ENCODE measurements at regions of chr20 and their contacts with region 1.

Region 1: DNA sequence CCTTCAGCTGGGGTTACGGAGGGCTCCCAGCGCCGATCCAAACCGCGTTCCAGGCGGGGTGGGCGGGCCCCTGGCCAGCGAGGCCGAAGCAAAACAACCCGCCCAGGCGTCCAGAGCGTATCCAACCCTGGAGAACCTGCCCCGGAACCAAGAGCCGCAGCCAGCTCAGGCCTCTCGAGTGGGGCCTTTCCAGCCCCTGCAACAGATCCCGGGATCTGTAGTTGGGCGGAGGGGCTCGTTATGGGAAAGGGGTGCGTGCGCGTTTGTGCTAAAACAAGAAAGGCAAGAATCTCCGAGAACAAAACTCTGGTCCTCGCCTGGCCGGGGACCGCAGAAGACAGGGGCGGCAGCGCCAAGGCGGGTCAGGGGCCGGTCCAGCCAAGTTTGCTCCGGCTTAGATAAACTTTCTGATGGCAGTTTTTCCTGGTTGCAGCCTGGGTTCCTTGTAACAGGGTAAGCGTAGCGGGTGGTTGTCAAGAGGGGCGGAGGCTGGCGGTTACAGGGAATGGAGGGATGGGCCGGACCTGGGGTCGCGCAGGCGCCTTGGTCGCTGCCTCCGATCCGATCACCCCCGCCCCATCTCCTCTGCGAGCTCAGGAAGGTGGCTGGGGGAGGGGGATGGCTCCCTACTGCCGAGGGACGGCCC is 448 bp upstream of the RIN2 start:
- DNase-seq: peak; percentile 86
- ATAC-seq: peak; percentile 82
- H3K4me3 ChIP-seq: peak overlapping the region; percentile 61 to 85 (median 70)
- H3K27ac ChIP-seq: peak overlapping the region; percentile 61
- H3K4me1 ChIP-seq: peaks cover 37% of the 10 kb centered on the region
- H3K27me3 ChIP-seq: peaks cover 0 to 24% of the 10 kb centered on the region in 2 experiments; a peak in 3 of 5 replicates
- CTCF ChIP-seq: peak; percentile 20; the same call in 1 of the 2 replicates
- EP300 ChIP-seq: no peak; a peak in 1 of 4 replicates
- POLR2A ChIP-seq: peak in 1 of 2 experiments; percentile 13; a peak in 1 of 4 replicates
- RAD21 ChIP-seq: no peak

Region 2: GRCh38 chr20:19609642-19610223 is 147.9 kb before region 1 on chr20:
- CTCF ChIA-PET with region 1: no interaction called
- POLR2A ChIA-PET with region 1: no interaction called
- in situ Hi-C with region 1: no loop called
- intact Hi-C with region 1: loop called (anchors 10 kb)
- DNase-seq: peak; percentile 98
- ATAC-seq: peak; percentile 98
- H3K4me3 ChIP-seq: 0 out of 6 replicates have a peak overlapping the region, but pooled peaks of 1 of the 3 experiments have one; percentile 19
- H3K27ac ChIP-seq: peak overlapping the region; percentile 73
- H3K4me1 ChIP-seq: peaks cover 82% of the 10 kb centered on the region
- H3K27me3 ChIP-seq: no peaks in the 10 kb centered on the region
- CTCF ChIP-seq: no peak
- EP300 ChIP-seq: peak; percentile 58 to 94; a peak in 3 of 4 replicates
- POLR2A ChIP-seq: no peak
- RAD21 ChIP-seq: no peak

Region 3: GRCh38 chr20:19770375-19770774 is 12.8 kb after region 1 on chr20:
- CTCF ChIA-PET with region 1: no interaction called
- POLR2A ChIA-PET with region 1: interaction called, 14 read pairs
- in situ Hi-C with region 1: no loop called
- intact Hi-C with region 1: no loop called
- DNase-seq: no peak
- ATAC-seq: no peak
- H3K4me3 ChIP-seq: no peak overlapping the region
- H3K27ac ChIP-seq: no peak overlapping the region
- H3K4me1 ChIP-seq: peaks cover 19% of the 10 kb centered on the region
- H3K27me3 ChIP-seq: no peaks in the 10 kb centered on the region
- CTCF ChIP-seq: no peak
- EP300 ChIP-seq: no peak
- POLR2A ChIP-seq: no peak
- RAD21 ChIP-seq: no peak

Region 4: GRCh38 chr20:20010639-20011500 is 253.3 kb after region 1 on chr20:
- CTCF ChIA-PET with region 1: no interaction called
- POLR2A ChIA-PET with region 1: interaction called, 11 read pairs
- in situ Hi-C with region 1: no loop called
- intact Hi-C with region 1: no loop called
- DNase-seq: peak; percentile 91
- ATAC-seq: peak; percentile 82
- H3K4me3 ChIP-seq: peak overlapping the region in 2 of 3 experiments; percentile 11 to 30; a peak in 2 of 6 replicates
- H3K27ac ChIP-seq: peak overlapping the region; percentile 58
- H3K4me1 ChIP-seq: peaks cover 69% of the 10 kb centered on the region
- H3K27me3 ChIP-seq: no peaks in the 10 kb centered on the region
- CTCF ChIP-seq: no peak
- EP300 ChIP-seq: peak in 1 of 2 experiments; percentile 93; a peak in 2 of 4 replicates
- POLR2A ChIP-seq: no peak
- RAD21 ChIP-seq: no peak